T-cell (primary cell): ENCODE measurements at regions of chr19 and their contacts with region 1.

Region 1: DNA sequence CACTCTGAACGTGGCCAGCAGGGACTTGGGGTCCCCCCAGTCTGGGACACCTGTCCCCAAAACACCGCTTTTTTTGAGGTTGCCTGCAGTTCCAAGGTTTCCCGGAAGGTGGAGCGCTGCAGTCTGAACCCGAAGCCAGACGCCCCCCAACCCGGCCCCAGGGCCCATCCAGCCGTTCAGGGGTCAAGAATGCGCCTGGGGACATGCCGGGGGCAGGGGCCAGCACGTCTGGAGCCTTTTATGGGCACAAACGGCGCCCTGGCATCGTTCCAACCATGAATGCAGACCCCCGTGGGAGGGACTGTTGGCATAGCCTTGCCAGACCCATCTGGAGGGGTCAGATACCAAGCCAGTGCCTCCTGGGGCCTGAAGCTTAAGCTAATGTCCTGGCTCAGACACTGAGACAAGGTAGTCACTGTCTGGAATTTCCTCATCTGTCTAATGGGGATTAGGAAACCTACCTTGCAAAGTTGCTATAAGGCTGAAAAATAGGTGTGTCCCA is 6.9 kb downstream of the S1PR5 start:
- DNase-seq: peak in 25 of 35 experiments; percentile 25 to 72 (median 51)
- ATAC-seq: no peak
- H3K4me3 ChIP-seq: no peak overlapping the region
- H3K4me3 Mint-ChIP-seq: no peak overlapping the region
- H3K27ac ChIP-seq: no peak overlapping the region
- H3K27ac Mint-ChIP-seq: no peak overlapping the region
- H3K4me1 ChIP-seq: peaks cover 11 to 74% of the 10 kb centered on the region in 2 experiments
- H3K4me1 Mint-ChIP-seq: peaks cover 5 to 29% (median 27%) of the 10 kb centered on the region in 3 donors
- H3K27me3 ChIP-seq: peaks cover 5 to 51% of the 10 kb centered on the region in 2 experiments
- H3K27me3 Mint-ChIP-seq: peaks cover 22 to 26% of the 10 kb centered on the region in 2 donors

Region 2: GRCh38 chr19:10491472-10492047 is 18.8 kb before region 1 on chr19:
- CTCF ChIA-PET with region 1: interaction called, 6 to 10 read pairs
- POLR2A ChIA-PET with region 1: no interaction called
- DNase-seq: no peak
- ATAC-seq: no peak
- H3K4me3 ChIP-seq: no peak overlapping the region
- H3K4me3 Mint-ChIP-seq: no peak overlapping the region
- H3K27ac ChIP-seq: no peak overlapping the region
- H3K27ac Mint-ChIP-seq: no peak overlapping the region
- H3K4me1 ChIP-seq: peaks cover 0 to 10% of the 10 kb centered on the region in 2 experiments
- H3K4me1 Mint-ChIP-seq: peaks cover 0 to 9% (median 7%) of the 10 kb centered on the region in 3 donors
- H3K27me3 ChIP-seq: no peaks in the 10 kb centered on the region
- H3K27me3 Mint-ChIP-seq: no peaks in the 10 kb centered on the region

Region 3: GRCh38 chr19:11551603-11552235 is 1041.4 kb after region 1 on chr19:
- CTCF ChIA-PET with region 1: no interaction called
- POLR2A ChIA-PET with region 1: no interaction called
- DNase-seq: no peak
- ATAC-seq: no peak
- H3K4me3 ChIP-seq: no peak overlapping the region
- H3K4me3 Mint-ChIP-seq: no peak overlapping the region
- H3K27ac ChIP-seq: no peak overlapping the region
- H3K27ac Mint-ChIP-seq: no peak overlapping the region
- H3K4me1 ChIP-seq: peaks cover 0 to 14% of the 10 kb centered on the region in 2 experiments
- H3K4me1 Mint-ChIP-seq: peaks cover 13 to 21% (median 15%) of the 10 kb centered on the region in 3 donors
- H3K27me3 ChIP-seq: no peaks in the 10 kb centered on the region
- H3K27me3 Mint-ChIP-seq: no peaks in the 10 kb centered on the region